Breast epithelium (tissue), 4 donors: ENCODE measurements at regions of chr17 and their contacts with region 1.

Region 1: DNA sequence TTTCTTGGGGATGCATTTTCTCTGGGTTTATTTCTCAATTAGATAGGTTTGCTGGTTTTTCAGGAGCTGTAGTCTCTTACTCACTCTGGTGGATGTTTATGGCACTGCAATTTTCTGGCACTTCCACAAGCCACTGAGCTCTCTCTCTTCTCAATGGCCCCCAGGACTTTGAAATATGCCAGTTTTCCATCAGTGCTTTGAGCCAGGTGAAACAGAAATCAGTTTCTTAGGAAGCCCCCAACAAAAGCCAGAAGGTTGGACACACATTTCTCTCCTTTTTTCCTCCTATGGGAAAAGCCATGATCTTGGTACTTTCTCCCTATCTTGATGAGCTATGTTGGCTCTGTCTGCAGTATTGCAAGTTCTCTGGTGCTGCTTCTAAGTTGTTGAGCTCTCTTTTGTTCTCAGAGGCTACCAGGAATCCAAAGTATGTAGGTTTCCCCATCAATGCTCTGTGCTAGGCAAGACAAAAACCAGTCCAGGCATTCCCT is 90.7 kb upstream of the SMIM36 start:
- DNase-seq: no peak
- H3K4me3 ChIP-seq: no peak overlapping the region
- H3K27ac ChIP-seq: no peak overlapping the region
- H3K4me1 ChIP-seq: no peaks in the 10 kb centered on the region
- H3K27me3 ChIP-seq: no peaks in the 10 kb centered on the region
- CTCF ChIP-seq: peak in 2 of 3 donors; percentile 17 to 48
- POLR2A ChIP-seq: no peak

Region 2: GRCh38 chr17:55527540-55528118 is 74.3 kb before region 1 on chr17:
- intact Hi-C with region 1: loop called (anchors 1 kb)
- DNase-seq: no peak
- H3K4me3 ChIP-seq: no peak overlapping the region
- H3K27ac ChIP-seq: no peak overlapping the region
- H3K4me1 ChIP-seq: no peaks in the 10 kb centered on the region
- H3K27me3 ChIP-seq: no peaks in the 10 kb centered on the region
- CTCF ChIP-seq: peak in 2 of 3 donors; percentile 42 to 47
- POLR2A ChIP-seq: no peak

Region 3: GRCh38 chr17:55622547-55622946 is 20.6 kb after region 1 on chr17:
- intact Hi-C with region 1: loop called (anchors 1 kb)
- DNase-seq: no peak
- H3K4me3 ChIP-seq: no peak overlapping the region
- H3K27ac ChIP-seq: no peak overlapping the region
- H3K4me1 ChIP-seq: no peaks in the 10 kb centered on the region
- H3K27me3 ChIP-seq: no peaks in the 10 kb centered on the region
- CTCF ChIP-seq: no peak
- POLR2A ChIP-seq: no peak